WTC11 (cell line): ENCODE measurements at regions of chr11 and their contacts with region 1.

Region 1: DNA sequence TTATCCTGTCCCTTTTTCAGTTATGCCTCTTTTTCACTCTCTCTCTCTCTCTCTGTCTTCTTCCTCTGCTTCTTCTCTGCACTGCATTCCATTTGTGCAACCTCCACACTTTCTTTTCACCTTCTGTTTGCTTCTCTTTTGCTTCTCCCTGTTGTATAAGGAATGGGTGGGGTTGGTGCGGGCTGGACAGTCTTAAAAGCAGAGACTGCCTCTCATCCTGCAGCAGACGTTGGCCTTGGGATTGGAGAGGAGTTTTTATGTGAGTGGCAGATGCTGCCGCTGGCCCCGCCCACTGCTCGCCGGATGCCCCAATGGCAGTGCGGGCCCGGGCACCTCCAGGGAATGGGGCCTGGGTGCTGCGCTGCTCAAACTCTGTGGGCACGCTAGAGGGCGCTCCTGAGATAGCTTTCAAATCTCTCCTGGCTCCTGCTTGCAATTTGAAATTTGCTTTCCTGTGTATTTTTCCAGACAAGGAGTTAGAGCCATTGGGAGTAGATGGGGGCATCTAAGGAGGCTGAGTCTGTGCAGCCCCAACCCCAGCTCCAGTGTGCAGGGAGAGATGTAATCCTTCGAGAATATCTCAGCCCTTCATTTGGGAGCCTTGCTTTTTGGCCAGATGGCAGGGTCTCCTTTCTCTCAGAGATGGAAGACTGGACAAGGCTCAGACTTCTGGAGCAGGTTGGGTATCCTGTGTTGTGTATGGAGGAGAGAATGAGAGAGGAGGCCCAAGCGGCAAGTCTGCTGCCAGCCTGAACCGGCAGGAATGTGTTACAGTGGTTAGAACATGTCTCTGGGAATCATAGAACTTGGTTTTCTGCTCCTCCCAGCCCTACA is 81.2 kb downstream of the GRAMD1B start:
- DNase-seq: peak; percentile 95
- ATAC-seq: peak; percentile 93
- H3K4me3 Mint-ChIP-seq: peak overlapping the region; percentile 1; the same call in 1 of the 2 replicates
- H3K27ac Mint-ChIP-seq: peak overlapping the region; percentile 63
- H3K4me1 Mint-ChIP-seq: peaks cover 41% of the 10 kb centered on the region
- H3K27me3 Mint-ChIP-seq: no peaks in the 10 kb centered on the region
- CTCF ChIP-seq: peak; percentile 88

Region 2: DNA sequence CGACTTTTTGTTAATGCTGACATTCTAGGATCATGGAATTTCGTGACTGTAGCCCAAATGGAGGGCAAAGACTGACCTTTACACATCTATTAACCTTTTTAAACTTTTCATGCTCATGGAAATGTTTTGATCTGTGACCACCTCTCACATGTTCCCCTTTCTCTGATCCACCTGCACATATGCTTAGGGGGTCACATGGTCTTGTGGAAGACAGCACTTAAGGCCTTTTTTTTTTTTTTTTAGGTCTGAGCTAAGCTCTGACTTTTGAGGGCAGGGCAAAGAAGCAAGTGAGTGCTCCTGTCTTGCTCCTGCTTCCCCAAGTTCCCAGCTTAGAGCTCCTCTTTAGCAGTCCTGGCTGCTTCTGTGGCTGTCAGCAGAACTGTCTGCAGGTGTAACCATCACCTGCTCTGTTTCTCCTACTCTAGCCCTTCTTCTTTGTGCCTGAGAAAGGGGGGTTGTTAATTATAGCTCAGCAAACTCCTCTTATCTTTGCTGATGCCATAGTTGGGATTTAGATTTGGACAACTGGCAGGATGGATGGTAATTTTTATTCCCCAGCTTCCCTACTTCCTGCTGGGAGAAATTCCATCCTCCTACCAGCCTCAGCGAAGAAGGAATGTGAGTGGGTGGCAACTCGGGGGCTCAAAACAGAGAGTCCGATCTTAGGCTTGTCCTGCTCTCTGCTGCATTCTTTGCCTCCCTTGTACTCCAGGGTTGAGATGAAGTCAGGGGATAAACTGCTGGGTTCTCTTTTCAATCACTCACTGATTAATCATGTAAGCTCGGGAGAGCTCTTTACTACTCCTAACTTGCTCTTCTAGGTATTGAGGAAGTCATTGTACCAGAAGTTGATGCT is 16.8 kb before region 1 on chr11:
- CTCF ChIA-PET with region 1: interaction called, 11 read pairs
- POLR2A ChIA-PET with region 1: no interaction called
- DNase-seq: no peak
- ATAC-seq: peak; percentile 65
- H3K4me3 Mint-ChIP-seq: no peak overlapping the region
- H3K27ac Mint-ChIP-seq: peak overlapping the region; percentile 64; the same call in 1 of the 2 replicates
- H3K4me1 Mint-ChIP-seq: peaks cover 31% of the 10 kb centered on the region
- H3K27me3 Mint-ChIP-seq: no peaks in the 10 kb centered on the region
- CTCF ChIP-seq: no peak

Region 3: DNA sequence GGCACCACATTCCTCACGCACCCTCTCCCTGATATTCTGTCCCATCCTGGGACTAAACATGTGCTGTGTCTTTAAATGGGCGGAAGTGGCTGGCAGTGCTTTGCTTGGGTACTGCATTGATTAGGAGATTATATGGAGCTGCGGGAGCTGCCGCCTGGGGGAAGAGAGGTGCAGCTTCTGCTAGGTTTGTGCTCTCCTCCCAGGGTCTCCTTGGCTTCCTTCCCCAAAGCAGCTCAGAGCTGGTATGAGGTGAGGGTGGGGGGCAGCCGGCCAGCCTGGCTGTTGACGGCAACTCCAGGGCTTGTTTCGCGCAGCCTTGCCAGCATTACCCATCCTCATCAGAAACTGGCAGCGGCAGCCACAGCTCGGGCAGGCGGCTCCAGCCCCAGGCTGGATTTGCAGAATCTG is 14.3 kb after region 1 on chr11:
- CTCF ChIA-PET with region 1: interaction called, 12 read pairs
- POLR2A ChIA-PET with region 1: no interaction called
- DNase-seq: no peak
- ATAC-seq: peak; percentile 74
- H3K4me3 Mint-ChIP-seq: no peak overlapping the region
- H3K27ac Mint-ChIP-seq: no peak overlapping the region
- H3K4me1 Mint-ChIP-seq: peaks cover 56% of the 10 kb centered on the region
- H3K27me3 Mint-ChIP-seq: no peaks in the 10 kb centered on the region
- CTCF ChIP-seq: no peak

Region 4: DNA sequence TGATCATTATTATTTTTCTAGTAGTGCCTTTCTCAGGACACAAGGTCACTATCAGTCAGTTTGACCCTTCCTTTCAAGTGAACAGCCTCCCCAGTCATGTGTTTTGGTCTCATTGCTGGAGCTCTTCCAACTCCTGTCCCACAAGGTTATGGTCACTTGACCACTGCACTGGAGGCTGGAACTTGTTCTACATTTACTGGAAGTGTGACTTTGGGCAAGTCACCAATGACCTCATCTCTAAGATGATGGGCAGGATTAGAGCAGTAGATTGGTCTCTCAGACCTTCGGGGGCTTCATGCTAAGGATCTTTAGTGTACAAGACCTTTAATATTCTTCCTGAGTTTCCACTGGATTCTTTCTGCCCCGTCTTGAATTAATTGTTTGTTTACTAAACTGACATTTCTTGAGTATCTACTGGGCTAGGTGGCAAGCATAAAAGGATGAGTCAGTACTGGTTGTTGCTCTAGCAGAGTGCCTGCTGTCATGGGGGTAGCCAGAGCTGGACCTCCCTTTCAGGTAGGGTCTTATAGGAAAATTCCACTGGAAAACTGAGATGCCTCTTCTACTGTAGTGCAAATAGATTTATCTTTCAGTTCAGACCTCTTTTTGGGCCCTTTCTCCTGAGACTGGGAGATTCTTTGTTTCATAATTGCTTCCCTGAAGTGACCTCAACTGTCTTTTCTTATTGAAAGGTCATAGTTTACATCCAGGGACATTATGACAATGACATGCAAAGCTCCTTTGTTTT is 25.6 kb after region 1 on chr11:
- CTCF ChIA-PET with region 1: interaction called, 11 read pairs
- POLR2A ChIA-PET with region 1: no interaction called
- DNase-seq: no peak
- ATAC-seq: peak; percentile 82
- H3K4me3 Mint-ChIP-seq: peak overlapping the region; percentile 16
- H3K27ac Mint-ChIP-seq: peak overlapping the region; percentile 97
- H3K4me1 Mint-ChIP-seq: peaks cover 53% of the 10 kb centered on the region
- H3K27me3 Mint-ChIP-seq: no peaks in the 10 kb centered on the region
- CTCF ChIP-seq: no peak